ENCODE measurements at regions of chr17 and their contacts with region 1.

Region 1: DNA sequence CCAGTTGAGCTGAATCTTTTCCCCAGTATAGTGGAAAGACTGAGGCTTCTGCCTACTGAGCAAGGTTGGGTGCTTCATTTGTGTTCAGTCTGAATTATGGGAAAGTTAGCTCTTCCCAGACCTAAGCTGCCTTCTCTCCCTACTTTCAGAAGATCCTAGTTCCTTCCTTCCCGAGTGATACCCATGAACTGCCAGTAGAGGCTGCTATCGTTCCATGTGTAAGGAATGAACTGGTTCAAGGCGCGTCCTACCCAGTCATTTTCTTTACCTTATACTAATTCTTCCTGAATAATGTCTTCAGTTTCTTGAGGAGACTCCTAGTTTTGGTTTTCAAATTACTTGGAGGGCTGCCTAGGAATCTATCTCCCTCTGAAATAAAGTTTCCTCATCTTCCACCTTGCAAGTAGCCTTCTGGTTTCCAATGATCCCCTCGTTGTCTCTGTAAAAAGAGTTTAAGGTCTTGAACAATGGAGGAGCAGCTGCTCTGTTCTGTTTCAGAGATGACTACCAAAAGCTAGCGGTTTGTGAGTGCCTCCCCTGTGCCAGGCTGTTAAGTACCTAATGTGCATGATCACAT is 934 bp upstream of the AOC2 start:
- DNase-seq: no peak

Region 2: DNA sequence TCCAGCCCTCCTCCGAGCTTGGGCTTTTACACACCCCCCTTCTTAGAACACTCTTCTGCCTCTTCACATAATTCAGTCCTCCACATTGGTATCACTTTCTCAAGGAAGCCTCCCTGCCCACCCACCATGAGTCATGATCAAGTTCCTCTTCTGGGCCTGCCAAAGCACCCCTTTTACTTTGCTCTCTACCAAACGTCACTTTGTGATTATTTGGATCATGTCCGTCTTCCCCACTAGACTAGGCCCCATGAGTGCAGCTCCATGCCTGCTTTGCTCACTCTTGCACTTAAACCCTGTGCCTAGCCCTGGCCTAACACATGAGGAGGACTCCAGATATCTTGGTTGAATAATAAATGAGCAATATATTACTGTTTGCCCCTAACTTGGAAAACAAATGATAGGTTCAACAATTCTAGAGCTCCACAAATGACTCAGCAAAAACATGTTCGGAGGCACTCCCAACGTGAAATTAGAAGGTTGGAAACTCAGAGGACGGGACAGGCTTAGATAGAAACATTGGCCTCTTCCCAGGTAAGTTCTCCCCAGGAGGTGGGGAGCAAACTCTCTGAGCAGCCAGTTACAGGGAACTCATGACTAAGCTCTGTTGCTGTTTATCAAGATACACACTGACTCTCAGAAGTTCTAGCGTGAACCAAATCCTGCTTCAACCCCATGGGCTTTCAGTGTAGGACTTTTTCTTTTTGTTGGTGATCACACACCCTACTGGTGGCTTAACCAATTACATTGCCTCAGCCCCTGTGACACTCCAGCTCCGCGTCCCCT is 85.5 kb after region 1 on chr17:
- intact Hi-C with region 1: loop called (anchors 5 kb)
- DNase-seq: no peak

Measured in cardiac septum (tissue), 1 donor.